Activated CD4-positive, alpha-beta T cell treated with anti-CD3 and anti-CD28 coated beads, Interleukin-2, amount 10 ng/mL, durations not matched to agents 24 days and 14 days (primary cell): ENCODE measurements at regions of chr2 and their contacts with region 1.

Region 1: DNA sequence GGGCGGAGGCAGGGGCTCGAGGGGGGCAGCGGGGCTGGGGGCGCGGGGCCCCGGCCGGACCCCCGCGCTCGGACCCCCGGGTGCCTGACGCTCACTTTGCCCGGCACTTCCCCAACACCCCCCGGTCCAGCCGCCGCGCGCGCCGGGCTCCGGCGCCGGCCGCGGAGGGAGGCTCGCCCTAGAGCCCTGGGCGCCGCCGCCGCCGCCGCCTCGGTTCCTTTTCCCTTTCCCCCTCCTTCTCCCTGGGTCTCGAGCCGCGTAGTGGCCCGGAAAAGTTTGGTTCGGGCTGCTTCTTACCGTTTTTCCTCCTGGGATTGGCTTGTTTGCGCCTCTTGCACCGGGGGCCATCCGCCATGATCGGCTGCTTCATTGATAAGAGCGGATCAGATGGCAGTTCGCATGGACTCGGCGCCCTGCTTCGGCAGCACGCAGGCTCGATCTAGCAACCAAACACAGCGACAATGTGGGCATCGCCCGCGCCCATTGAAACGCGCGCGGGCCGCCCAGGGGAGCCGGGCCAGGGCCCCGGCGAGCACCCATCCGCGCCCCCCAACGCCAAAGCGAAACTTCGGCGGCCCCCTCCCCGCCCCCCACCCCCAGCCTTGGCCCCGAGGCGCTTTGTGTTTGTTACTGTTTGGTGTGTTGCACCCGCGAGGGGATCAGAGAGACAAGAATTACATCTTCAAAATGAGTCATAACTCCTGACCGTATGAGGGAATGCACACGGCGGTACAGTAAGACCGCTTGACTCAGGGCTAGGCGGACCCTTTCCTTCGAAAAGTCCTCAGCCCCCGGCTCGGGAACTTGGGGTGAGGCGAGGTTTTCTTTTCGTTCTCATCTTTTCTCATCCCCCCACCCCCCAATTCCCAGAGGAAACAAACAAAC is 2.7 kb downstream of the ZEB2 start:
- DNase-seq: peak; percentile 85
- H3K4me3 Mint-ChIP-seq: no peak overlapping the region
- H3K27ac Mint-ChIP-seq: no peak overlapping the region
- H3K4me1 Mint-ChIP-seq: peaks cover 17% of the 10 kb centered on the region
- H3K27me3 Mint-ChIP-seq: peaks cover 49% of the 10 kb centered on the region

Region 2: DNA sequence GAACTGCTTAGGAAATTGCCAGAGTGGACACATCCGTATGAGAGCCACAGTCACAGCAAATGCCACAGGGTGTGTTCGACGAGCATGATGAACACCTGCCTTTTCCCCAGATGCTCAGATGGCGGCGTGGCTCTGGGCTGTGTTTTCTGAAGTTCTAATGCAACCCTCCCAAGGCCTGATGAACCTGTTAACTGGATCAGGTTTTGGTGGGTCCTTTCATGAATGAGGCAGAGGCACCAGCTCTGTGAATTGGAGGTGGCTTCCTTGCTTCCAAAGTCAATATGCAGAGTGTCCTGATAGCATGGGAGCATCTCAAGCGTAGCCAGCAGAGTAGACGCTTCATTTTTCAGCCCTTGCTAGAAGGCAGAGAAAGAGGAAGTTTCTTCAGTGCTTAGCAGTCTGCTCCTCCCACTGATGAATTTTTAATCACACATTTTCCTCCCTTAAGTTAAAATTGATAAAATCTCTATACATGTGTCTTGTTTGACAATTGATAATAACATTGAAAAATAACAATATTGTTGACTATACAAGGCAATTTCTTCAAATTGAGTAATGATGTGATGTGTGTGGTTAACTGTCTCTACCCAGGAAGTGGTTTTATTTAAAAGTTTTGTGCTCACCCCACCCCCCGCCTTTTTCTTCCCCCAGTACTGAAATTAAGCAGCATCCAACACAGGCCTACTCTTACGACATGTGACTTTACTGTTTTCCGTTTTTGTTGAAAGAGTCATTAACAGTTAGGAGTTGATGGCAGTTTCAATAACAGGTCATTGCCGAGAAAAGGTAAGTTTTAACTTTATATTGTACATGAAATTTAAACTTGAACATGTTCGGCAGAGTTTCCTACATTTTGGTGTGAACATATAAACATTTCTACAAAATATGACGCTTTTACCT is 1388.3 kb before region 1 on chr2 and contains the start of gene ARHGAP15:
- intact Hi-C with region 1: loop called (anchors 10 kb)
- DNase-seq: peak; percentile 90
- H3K4me3 Mint-ChIP-seq: peak within 1 kb of the TSS; percentile 80
- H3K27ac Mint-ChIP-seq: peak within 1 kb of the TSS; percentile 99
- H3K4me1 Mint-ChIP-seq: peaks cover 37% of the 10 kb centered on the region
- H3K27me3 Mint-ChIP-seq: no peaks in the 10 kb centered on the region
- total RNA-seq, gene ARHGAP15: 56.0 and 56.2 TPM in 2 replicates

Region 3: DNA sequence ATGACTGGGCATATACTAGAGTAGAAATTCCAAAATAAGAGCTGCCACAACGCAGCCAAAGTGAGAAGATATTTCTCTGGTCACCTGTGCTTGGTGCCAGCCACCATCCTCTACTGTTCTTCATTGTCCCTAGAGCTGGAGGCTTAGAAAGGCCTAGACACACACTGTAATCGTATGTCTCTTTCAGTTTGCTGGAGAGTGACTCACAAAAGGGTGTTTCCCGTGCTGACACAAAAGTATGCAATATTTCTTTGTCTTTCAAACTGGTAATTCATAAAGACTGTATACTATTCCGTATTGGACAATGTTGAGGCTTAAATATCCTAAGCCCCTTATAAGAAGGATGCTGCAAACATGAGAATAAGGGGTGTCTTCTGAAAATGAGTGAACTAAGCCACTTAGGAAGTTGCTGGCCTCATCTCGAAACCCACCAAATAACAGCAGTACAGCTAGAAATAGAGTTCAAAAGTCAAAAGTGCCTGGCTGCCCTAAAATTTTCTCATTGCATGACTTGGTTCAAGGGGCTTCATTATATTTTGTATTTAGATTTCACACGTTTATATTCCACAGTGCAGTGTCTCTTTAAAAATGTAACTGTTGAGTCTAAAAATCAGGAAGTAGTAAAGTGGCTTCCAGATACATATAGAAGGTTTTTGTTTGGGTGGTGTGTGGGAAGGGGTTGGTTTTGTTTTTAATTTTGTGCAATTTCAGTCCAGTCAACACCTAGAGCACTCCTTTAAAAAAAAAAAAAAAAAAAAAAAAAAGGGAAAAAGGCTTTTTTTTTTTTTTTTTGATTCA is 786.9 kb before region 1 on chr2:
- intact Hi-C with region 1: loop called (anchors 10 kb)
- DNase-seq: peak; percentile 63
- H3K4me3 Mint-ChIP-seq: peak overlapping the region; percentile 47
- H3K27ac Mint-ChIP-seq: peak overlapping the region; percentile 92
- H3K4me1 Mint-ChIP-seq: peaks cover 31% of the 10 kb centered on the region
- H3K27me3 Mint-ChIP-seq: no peaks in the 10 kb centered on the region

Region 4: DNA sequence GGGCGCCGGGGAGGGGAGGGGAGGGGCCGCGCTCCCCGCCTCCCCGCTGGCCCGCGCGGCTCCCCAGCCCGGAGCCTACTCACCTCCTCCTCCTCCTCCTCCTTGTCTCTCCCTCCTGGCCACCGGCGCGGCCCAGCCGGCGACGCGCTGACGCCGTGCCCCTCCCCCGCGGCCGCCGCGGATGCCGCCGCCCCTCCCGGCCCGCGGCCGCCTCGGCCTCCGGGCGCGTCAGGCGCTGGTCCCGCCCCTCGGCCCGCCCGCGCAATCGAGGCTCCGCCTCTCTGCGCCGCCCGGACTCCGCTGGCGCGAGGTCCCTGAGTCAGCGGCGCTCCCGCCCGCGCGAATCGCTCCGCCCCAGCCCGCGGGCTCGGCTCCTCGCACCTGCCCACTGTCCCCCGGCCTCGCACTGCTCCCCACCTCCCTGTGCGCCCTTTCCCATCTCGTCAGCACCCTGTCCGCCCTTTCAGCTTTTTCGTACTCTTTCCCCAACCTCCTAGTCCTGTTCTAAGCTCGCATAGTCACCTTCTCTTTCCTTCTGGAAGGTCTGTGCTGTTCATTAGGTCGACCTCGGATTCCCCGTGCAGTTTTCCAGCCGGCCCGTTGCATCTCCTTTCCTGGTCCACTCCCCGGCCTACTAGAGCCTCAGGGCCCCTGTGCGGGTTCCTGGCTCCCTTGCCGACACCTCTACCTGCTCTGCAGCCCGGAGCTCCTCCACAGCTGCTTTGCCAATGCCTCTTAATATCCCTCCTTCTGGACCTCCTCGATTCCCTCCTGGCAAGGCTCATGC is 184.7 kb before region 1 on chr2:
- intact Hi-C with region 1: loop called (anchors 1 kb)
- DNase-seq: peak; percentile 98
- H3K4me3 Mint-ChIP-seq: peak overlapping the region; percentile 95
- H3K27ac Mint-ChIP-seq: peak overlapping the region; percentile 90
- H3K4me1 Mint-ChIP-seq: peaks cover 44% of the 10 kb centered on the region
- H3K27me3 Mint-ChIP-seq: peaks cover 6% of the 10 kb centered on the region

Region 5: GRCh38 chr2:144374163-144374661 is 143.0 kb before region 1 on chr2:
- intact Hi-C with region 1: no loop called
- DNase-seq: no peak
- H3K4me3 Mint-ChIP-seq: no peak overlapping the region
- H3K27ac Mint-ChIP-seq: no peak overlapping the region
- H3K4me1 Mint-ChIP-seq: peaks cover 33% of the 10 kb centered on the region
- H3K27me3 Mint-ChIP-seq: peaks cover 7% of the 10 kb centered on the region

Region 6: DNA sequence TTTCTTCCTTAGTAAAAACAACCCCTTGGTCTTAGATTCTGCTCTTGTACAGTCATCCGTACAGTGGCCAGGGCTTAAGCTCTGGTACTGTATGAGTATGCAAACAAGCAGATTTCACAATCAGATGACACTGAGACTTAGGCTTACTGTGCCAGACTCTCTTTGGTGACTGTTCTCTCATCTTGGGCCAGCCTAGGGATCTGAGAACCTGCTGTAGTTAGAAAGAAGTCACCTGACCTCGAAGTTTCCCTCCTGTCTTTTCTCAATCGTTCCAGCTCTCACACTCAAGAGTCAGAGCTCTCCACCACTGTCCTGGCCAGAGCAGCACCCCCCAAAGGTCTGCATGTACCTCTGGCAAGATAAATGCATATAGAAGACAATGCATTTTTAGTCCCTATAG is 60.5 kb before region 1 on chr2:
- intact Hi-C with region 1: loop called (anchors 2 kb)
- DNase-seq: no peak
- H3K4me3 Mint-ChIP-seq: no peak overlapping the region
- H3K27ac Mint-ChIP-seq: no peak overlapping the region
- H3K4me1 Mint-ChIP-seq: peaks cover 38% of the 10 kb centered on the region
- H3K27me3 Mint-ChIP-seq: peaks cover 7% of the 10 kb centered on the region

Region 7: GRCh38 chr2:144505245-144505831 is 11.9 kb before region 1 on chr2:
- intact Hi-C with region 1: loop called (anchors 1 kb)
- DNase-seq: peak; percentile 54
- H3K4me3 Mint-ChIP-seq: no peak overlapping the region
- H3K27ac Mint-ChIP-seq: no peak overlapping the region
- H3K4me1 Mint-ChIP-seq: peaks cover 30% of the 10 kb centered on the region
- H3K27me3 Mint-ChIP-seq: peaks cover 31% of the 10 kb centered on the region

Region 8: GRCh38 chr2:144572977-144573376 is 55.8 kb after region 1 on chr2:
- intact Hi-C with region 1: no loop called
- DNase-seq: no peak
- H3K4me3 Mint-ChIP-seq: no peak overlapping the region
- H3K27ac Mint-ChIP-seq: no peak overlapping the region
- H3K4me1 Mint-ChIP-seq: no peaks in the 10 kb centered on the region
- H3K27me3 Mint-ChIP-seq: peaks cover 7% of the 10 kb centered on the region